Activated B cell treated with CpG ODN at 0.5 μM for 24 hours (primary cell): ENCODE measurements at regions of chr1 and their contacts with region 1.

Region 1: GRCh38 chr1:153510984-153511410 is 24.8 kb downstream of the S100A6 start:
- DNase-seq: peak; percentile 67
- ATAC-seq: peak; percentile 97
- H3K4me3 Mint-ChIP-seq: no peak overlapping the region
- H3K27ac Mint-ChIP-seq: no peak overlapping the region
- H3K4me1 Mint-ChIP-seq: peaks cover 4% of the 10 kb centered on the region
- H3K27me3 Mint-ChIP-seq: no peaks in the 10 kb centered on the region
- CTCF ChIP-seq: peak; percentile 81

Region 2: DNA sequence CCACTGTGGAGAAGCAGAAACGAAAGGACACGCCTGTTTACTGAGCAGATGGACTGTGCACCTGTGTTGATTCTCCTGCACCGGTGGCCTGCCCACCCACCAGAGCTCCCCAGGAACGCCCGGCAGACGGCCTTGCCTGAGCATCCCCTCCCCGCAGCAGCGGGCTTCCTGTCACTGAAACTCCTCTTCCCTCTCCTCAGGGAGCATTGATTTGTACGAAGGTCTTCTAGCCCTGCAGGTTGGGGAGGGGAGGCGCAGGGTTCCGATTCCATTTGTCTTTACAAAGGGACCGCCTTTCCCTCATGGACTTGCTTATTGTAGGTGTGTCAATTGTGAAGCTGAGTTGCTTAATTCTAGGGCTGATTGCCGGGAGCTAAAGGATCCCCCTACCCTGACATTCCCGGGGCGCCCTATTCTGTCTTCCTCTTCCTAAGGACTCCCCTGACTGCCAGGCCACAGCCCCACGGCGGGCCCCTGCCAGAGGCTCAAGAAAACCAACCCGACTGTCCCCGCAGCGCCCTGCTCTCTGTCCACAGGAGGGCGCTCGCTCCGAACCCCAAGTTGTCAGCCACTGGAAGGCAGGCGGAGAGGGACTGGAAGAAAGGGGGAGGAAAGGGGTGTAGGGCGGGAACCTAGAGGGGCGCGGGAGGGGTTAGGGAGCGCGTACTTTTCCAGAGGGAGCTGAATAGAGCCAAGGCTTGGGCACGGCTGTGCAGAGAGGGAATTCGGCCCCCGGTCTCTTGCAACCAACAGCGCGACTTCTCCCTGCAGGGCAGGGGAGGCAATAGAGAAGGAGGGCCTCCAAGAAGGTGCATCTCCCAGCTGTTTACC is 22.0 kb after region 1 on chr1:
- CTCF ChIA-PET with region 1: interaction called, 32 read pairs
- POLR2A ChIA-PET with region 1: interaction called, 4 read pairs
- intact Hi-C with region 1: loop called (anchors 1 kb)
- DNase-seq: peak; percentile 60
- ATAC-seq: peak; percentile 26
- H3K4me3 Mint-ChIP-seq: peak overlapping the region; percentile 48
- H3K27ac Mint-ChIP-seq: peak overlapping the region; percentile 13
- H3K4me1 Mint-ChIP-seq: peaks cover 45% of the 10 kb centered on the region
- H3K27me3 Mint-ChIP-seq: no peaks in the 10 kb centered on the region
- CTCF ChIP-seq: no peak

Region 3: DNA sequence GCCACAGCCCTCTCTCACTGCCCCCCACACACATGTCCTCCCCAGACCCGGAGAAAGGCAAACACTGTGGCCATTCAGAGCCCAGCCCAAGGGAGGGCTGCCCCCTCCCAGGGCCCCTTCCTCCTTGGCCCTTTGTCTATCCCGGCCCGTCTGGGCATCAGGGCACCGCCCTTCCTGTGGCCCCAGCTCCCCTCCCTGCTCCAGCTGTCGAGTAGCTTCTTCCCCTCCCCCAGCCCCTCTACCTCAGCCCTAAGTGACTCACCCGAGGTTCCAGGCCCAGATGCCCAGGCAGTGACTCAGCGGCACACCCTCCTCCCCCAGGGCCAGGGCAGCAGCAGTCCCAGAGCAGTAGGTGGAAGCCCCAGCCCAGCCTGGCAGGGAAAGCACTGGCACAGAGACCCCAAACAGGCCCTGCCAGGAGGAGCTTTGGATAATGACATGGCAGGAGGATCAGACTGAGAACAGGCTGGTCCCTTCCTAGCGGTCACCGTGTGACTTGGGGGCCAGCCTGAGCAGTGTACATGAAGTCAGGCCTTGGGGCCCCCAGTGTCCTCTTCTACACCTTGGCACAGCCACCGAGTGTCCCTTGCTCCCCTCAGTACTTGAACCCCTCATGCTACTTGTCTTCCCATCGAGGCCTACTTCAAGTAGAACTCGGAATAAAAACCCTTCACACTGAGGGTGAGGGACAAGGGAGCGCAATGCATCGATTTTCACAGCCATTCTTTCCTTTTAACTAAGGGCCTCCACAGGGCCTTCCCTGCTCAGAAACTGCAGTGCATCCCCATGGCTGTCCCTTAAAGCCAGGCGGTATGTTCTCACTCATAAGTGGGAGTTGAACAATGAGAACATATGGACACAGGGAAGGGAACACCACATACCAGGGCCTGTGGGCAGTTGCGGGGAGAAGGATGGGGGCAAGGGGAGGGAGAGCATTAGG is 55.7 kb after region 1 on chr1:
- CTCF ChIA-PET with region 1: interaction called, 113 read pairs
- POLR2A ChIA-PET with region 1: interaction called, 4 read pairs
- intact Hi-C with region 1: loop called (anchors 1 kb)
- DNase-seq: peak; percentile 71
- ATAC-seq: peak; percentile 82
- H3K4me3 Mint-ChIP-seq: peak overlapping the region; percentile 70
- H3K27ac Mint-ChIP-seq: peak overlapping the region; percentile 99
- H3K4me1 Mint-ChIP-seq: peaks cover 36% of the 10 kb centered on the region
- H3K27me3 Mint-ChIP-seq: peaks cover 6% of the 10 kb centered on the region
- CTCF ChIP-seq: no peak

Region 4: DNA sequence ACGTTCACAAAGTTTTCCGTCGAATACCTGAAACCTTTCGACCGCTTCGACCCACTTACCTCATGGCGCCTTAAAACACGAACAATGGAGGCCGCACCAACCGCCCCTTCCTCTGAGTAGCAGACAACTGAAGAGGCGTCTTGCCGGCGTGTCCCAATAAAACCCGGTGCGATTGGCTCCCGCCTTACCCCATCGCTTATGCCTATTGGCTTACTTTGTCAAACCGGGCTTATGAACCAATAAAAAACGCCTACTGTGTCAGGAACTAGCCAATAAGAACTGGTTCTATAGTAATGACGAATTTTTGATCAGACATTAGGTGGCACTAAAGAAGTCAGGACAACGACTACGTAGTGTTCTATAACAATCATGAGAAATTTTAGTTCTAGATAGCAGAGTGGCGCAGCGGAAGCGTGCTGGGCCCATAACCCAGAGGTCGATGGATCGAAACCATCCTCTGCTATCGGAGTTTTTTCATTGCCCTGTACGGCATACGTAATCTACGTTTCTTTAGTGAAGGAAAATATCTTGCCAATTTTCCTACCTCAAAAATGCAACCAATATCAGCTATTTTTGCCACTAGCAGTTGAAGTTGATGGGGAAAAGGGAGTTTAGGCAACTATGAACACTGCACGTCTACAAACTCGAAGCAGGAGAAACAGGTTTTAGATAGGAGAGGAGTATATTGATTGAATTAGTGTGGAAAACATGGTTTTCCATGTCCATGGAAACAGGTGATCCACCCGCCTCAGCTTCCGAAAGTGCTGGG is 160.0 kb after region 1 on chr1 and contains the start of gene ILF2:
- CTCF ChIA-PET with region 1: interaction called, 6 read pairs
- POLR2A ChIA-PET with region 1: no interaction called
- intact Hi-C with region 1: loop called (anchors 2 kb)
- DNase-seq: peak; percentile 85
- ATAC-seq: peak; percentile 83
- H3K4me3 Mint-ChIP-seq: no peak within 1 kb of the TSS
- H3K27ac Mint-ChIP-seq: no peak within 1 kb of the TSS
- H3K4me1 Mint-ChIP-seq: peaks cover 28% of the 10 kb centered on the region
- H3K27me3 Mint-ChIP-seq: no peaks in the 10 kb centered on the region
- CTCF ChIP-seq: no peak
- total RNA-seq, gene ILF2: 182 and 191 TPM in 2 replicates

Region 5: DNA sequence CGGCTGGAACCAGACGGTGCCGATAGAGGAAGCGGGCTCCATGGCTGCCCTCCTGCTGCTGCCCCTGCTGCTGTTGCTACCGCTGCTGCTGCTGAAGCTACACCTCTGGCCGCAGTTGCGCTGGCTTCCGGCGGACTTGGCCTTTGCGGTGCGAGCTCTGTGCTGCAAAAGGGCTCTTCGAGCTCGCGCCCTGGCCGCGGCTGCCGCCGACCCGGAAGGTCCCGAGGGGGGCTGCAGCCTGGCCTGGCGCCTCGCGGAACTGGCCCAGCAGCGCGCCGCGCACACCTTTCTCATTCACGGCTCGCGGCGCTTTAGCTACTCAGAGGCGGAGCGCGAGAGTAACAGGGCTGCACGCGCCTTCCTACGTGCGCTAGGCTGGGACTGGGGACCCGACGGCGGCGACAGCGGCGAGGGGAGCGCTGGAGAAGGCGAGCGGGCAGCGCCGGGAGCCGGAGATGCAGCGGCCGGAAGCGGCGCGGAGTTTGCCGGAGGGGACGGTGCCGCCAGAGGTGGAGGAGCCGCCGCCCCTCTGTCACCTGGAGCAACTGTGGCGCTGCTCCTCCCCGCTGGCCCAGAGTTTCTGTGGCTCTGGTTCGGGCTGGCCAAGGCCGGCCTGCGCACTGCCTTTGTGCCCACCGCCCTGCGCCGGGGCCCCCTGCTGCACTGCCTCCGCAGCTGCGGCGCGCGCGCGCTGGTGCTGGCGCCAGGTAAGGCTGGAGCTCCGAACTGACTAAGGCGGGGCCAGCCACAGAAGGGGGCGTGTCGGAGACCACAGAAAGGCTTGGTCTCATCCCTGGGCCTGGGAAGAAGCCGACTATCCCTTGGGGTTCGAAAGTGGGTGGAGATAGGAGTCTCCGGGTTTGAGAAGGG is 264.7 kb after region 1 on chr1:
- CTCF ChIA-PET with region 1: no interaction called
- POLR2A ChIA-PET with region 1: no interaction called
- intact Hi-C with region 1: loop called (anchors 10 kb)
- DNase-seq: peak; percentile 50
- ATAC-seq: peak; percentile 71
- H3K4me3 Mint-ChIP-seq: peak overlapping the region; percentile 86
- H3K27ac Mint-ChIP-seq: peak overlapping the region; percentile 75
- H3K4me1 Mint-ChIP-seq: peaks cover 31% of the 10 kb centered on the region
- H3K27me3 Mint-ChIP-seq: no peaks in the 10 kb centered on the region
- CTCF ChIP-seq: no peak